ENCODE measurements at regions of chr14 and their contacts with region 1.

Region 1: GRCh38 chr14:45940307-45940706 is 687.3 kb upstream of the MIS18BP1 start:
- DNase-seq: no peak
- H3K4me3 Mint-ChIP-seq: no peak overlapping the region
- H3K27ac Mint-ChIP-seq: no peak overlapping the region
- H3K4me1 Mint-ChIP-seq: no peaks in the 10 kb centered on the region
- H3K27me3 Mint-ChIP-seq: peaks cover 11% of the 10 kb centered on the region
- CTCF ChIP-seq: peak; percentile 18

Region 2: GRCh38 chr14:45426670-45427282 is 513.5 kb before region 1 on chr14:
- CTCF ChIA-PET with region 1: no interaction called
- POLR2A ChIA-PET with region 1: no interaction called
- intact Hi-C with region 1: loop called (anchors 1 kb)
- DNase-seq: peak; percentile 64
- H3K4me3 Mint-ChIP-seq: no peak overlapping the region
- H3K27ac Mint-ChIP-seq: no peak overlapping the region
- H3K4me1 Mint-ChIP-seq: no peaks in the 10 kb centered on the region
- H3K27me3 Mint-ChIP-seq: no peaks in the 10 kb centered on the region
- CTCF ChIP-seq: peak; percentile 57

Region 3: GRCh38 chr14:45610318-45610717 is 330.0 kb before region 1 on chr14:
- CTCF ChIA-PET with region 1: interaction called, 3 read pairs
- POLR2A ChIA-PET with region 1: no interaction called
- intact Hi-C with region 1: loop called (anchors 5 kb)
- DNase-seq: peak; percentile 35
- H3K4me3 Mint-ChIP-seq: no peak overlapping the region
- H3K27ac Mint-ChIP-seq: no peak overlapping the region
- H3K4me1 Mint-ChIP-seq: no peaks in the 10 kb centered on the region
- H3K27me3 Mint-ChIP-seq: no peaks in the 10 kb centered on the region
- CTCF ChIP-seq: peak; percentile 38

Region 4: GRCh38 chr14:45838597-45838996 is 101.7 kb before region 1 on chr14:
- CTCF ChIA-PET with region 1: interaction called, 11 read pairs
- POLR2A ChIA-PET with region 1: no interaction called
- intact Hi-C with region 1: loop called (anchors 2 kb)
- DNase-seq: peak; percentile 34
- H3K4me3 Mint-ChIP-seq: no peak overlapping the region
- H3K27ac Mint-ChIP-seq: no peak overlapping the region
- H3K4me1 Mint-ChIP-seq: no peaks in the 10 kb centered on the region
- H3K27me3 Mint-ChIP-seq: no peaks in the 10 kb centered on the region
- CTCF ChIP-seq: no peak

Region 5: GRCh38 chr14:45916322-45916953 is 23.9 kb before region 1 on chr14:
- CTCF ChIA-PET with region 1: no interaction called
- POLR2A ChIA-PET with region 1: no interaction called
- intact Hi-C with region 1: no loop called
- DNase-seq: no peak
- H3K4me3 Mint-ChIP-seq: no peak overlapping the region
- H3K27ac Mint-ChIP-seq: no peak overlapping the region
- H3K4me1 Mint-ChIP-seq: peaks cover 15% of the 10 kb centered on the region
- H3K27me3 Mint-ChIP-seq: no peaks in the 10 kb centered on the region
- CTCF ChIP-seq: no peak

Measured in MCF 10A (cell line).